WTC11 (cell line): ENCODE measurements at regions of chr16 and their contacts with region 1.

Region 1: DNA sequence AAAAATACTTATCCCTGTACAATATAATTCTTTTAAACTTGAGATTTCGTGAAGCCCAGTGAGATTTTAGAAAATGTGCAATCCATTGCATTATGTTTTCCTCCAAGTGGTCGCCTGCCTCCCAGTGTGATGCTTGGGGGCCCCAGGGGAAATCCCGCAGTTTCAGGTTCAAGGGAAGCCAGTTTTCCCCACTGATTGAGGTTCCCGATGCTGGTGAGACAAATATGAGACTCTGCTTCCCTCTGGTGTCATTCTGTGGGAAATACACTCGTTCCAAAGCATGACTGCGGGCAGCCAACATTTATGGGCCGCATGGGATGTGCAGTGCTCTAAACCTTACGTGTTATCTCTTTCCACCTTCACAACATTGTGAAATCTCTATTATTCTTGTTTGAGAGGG is 200.8 kb downstream of the PRKCB start:
- DNase-seq: peak; percentile 59
- ATAC-seq: peak; percentile 87
- H3K4me3 Mint-ChIP-seq: no peak overlapping the region
- H3K27ac Mint-ChIP-seq: no peak overlapping the region
- H3K4me1 Mint-ChIP-seq: peaks cover 2% of the 10 kb centered on the region; the same call in 1 of the 2 replicates
- H3K27me3 Mint-ChIP-seq: no peaks in the 10 kb centered on the region
- CTCF ChIP-seq: peak; percentile 67

Region 2: GRCh38 chr16:23999663-24000062 is 37.0 kb before region 1 on chr16:
- CTCF ChIA-PET with region 1: no interaction called
- POLR2A ChIA-PET with region 1: no interaction called
- DNase-seq: no peak
- ATAC-seq: no peak
- H3K4me3 Mint-ChIP-seq: no peak overlapping the region
- H3K27ac Mint-ChIP-seq: no peak overlapping the region
- H3K4me1 Mint-ChIP-seq: no peaks in the 10 kb centered on the region
- H3K27me3 Mint-ChIP-seq: peaks cover 7% of the 10 kb centered on the region; the same call in 1 of the 2 replicates
- CTCF ChIP-seq: no peak

Region 3: GRCh38 chr16:24015923-24016322 is 20.7 kb before region 1 on chr16:
- CTCF ChIA-PET with region 1: interaction called, 23 read pairs
- POLR2A ChIA-PET with region 1: no interaction called
- DNase-seq: no peak
- ATAC-seq: no peak
- H3K4me3 Mint-ChIP-seq: no peak overlapping the region
- H3K27ac Mint-ChIP-seq: no peak overlapping the region
- H3K4me1 Mint-ChIP-seq: 0 out of 2 replicates have a peak, but pooled peaks cover 3% of the 10 kb centered on the region
- H3K27me3 Mint-ChIP-seq: no peaks in the 10 kb centered on the region; the same call in 1 of the 2 replicates
- CTCF ChIP-seq: no peak